Activated CD4-positive, alpha-beta T cell treated with anti-CD3 and anti-CD28 coated beads, Interleukin-2, amount 10 ng/mL, durations not matched to agents 7 days and 5 days (primary cell): ENCODE measurements at regions of chr4 and their contacts with region 1.

Region 1: GRCh38 chr4:121182296-121182695 is 18.2 kb upstream of the TNIP3 start:
- DNase-seq: peak; percentile 36
- H3K4me3 Mint-ChIP-seq: peak overlapping the region; percentile 73
- H3K27ac Mint-ChIP-seq: peak overlapping the region; percentile 92
- H3K4me1 Mint-ChIP-seq: peaks cover 58% of the 10 kb centered on the region
- H3K27me3 Mint-ChIP-seq: no peaks in the 10 kb centered on the region

Region 2: GRCh38 chr4:121192480-121192879 is 10.2 kb after region 1 on chr4:
- CTCF ChIA-PET with region 1: interaction called, 11 read pairs
- POLR2A ChIA-PET with region 1: no interaction called
- DNase-seq: peak; percentile 25
- H3K4me3 Mint-ChIP-seq: no peak overlapping the region
- H3K27ac Mint-ChIP-seq: no peak overlapping the region
- H3K4me1 Mint-ChIP-seq: peaks cover 56% of the 10 kb centered on the region
- H3K27me3 Mint-ChIP-seq: no peaks in the 10 kb centered on the region